Right cardiac atrium (tissue), 5 donors: ENCODE measurements at regions of chr17 and their contacts with region 1.

Region 1: DNA sequence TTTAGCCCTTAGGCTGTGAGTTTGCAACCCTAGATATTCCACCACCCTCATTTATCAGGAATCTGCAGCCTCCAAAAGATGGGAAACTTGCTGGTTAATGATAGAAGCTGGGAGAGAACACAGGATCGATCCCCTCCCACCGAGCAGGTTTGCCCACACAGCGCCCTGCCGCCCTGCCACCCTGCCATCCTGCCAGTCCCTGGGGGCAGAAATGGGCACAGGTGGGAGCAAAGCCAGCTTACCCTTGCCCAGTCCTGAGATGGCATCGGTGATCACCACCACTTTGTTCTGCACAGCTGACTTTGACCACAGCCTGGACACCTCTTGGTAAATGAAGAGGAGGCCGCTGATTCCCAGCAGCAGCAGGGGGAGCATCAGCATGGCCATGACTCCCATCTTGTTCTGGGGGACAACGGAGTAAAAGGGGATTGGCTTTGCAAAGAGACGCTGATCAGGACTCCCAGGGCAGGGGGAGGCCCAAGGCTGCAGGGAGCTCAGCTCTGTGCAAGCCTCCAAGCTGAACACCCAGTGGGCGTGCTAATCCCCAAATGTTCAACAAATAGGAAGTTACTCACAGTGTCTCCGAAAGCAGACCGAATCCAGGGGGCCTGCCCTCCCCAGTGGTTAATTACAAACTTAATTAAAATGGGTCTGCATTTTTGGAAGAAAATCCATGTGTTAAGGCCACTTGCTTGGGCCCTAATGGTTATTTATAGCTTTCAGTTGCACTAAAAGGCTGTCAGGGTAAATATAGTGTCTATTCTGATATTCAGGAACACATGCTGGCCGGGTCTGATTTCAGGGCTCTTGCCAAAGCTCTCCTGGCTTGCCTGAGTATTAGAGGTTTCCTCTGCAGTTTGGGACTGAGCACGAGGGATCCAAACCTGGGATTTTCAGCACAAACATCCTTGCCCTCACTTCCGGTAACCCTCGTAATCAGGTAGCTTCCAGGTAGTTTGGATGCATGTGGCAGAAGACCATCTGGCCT is at the start of gene DHRS7C:
- DNase-seq: peak; percentile 32 to 76 (median 69)
- ATAC-seq: peak; percentile 71 to 87
- H3K4me3 ChIP-seq: peak within 1 kb of the TSS; percentile 21
- H3K27ac ChIP-seq: peak within 1 kb of the TSS; percentile 91
- H3K4me1 ChIP-seq: no peaks in the 10 kb centered on the region
- H3K27me3 ChIP-seq: no peaks in the 10 kb centered on the region
- total RNA-seq, gene DHRS7C: 100 to 317 (median 205) TPM

Region 2: GRCh38 chr17:9668517-9668916 is 122.7 kb before region 1 on chr17:
- intact Hi-C with region 1: no loop called
- DNase-seq: no peak
- ATAC-seq: no peak
- H3K4me3 ChIP-seq: no peak overlapping the region
- H3K27ac ChIP-seq: no peak overlapping the region
- H3K4me1 ChIP-seq: no peaks in the 10 kb centered on the region
- H3K27me3 ChIP-seq: no peaks in the 10 kb centered on the region

Region 3: GRCh38 chr17:9837551-9838471 is 46.6 kb after region 1 on chr17:
- intact Hi-C with region 1: loop called in 1 of 4 experiments (anchors 5 kb)
- DNase-seq: peak; percentile 79 to 84 (median 83)
- ATAC-seq: peak; percentile 82 to 92
- H3K4me3 ChIP-seq: no peak overlapping the region
- H3K27ac ChIP-seq: peak overlapping the region; percentile 73
- H3K4me1 ChIP-seq: peaks cover 5% of the 10 kb centered on the region
- H3K27me3 ChIP-seq: no peaks in the 10 kb centered on the region